Naive thymus-derived CD4-positive, alpha-beta T cell (primary cell): ENCODE measurements at regions of chr9 and their contacts with region 1.

Region 1: GRCh38 chr9:3467593-3468219 is 58.1 kb downstream of the RFX3 start:
- DNase-seq: peak; percentile 13 to 72 (median 53)
- ATAC-seq: peak; percentile 98
- H3K4me3 ChIP-seq: no peak overlapping the region
- H3K4me3 Mint-ChIP-seq: peak overlapping the region in 1 of 10 donors; percentile 39
- H3K27ac ChIP-seq: no peak overlapping the region
- H3K27ac Mint-ChIP-seq: peak overlapping the region in 3 of 9 donors; percentile 40 to 65 (median 53)
- H3K4me1 ChIP-seq: peaks cover 3 to 4% of the 10 kb centered on the region in 2 donors
- H3K4me1 Mint-ChIP-seq: peaks cover 3 to 25% (median 4%) of the 10 kb centered on the region in 7 donors
- H3K27me3 ChIP-seq: no peaks in the 10 kb centered on the region
- H3K27me3 Mint-ChIP-seq: no peaks in the 10 kb centered on the region

Region 2: DNA sequence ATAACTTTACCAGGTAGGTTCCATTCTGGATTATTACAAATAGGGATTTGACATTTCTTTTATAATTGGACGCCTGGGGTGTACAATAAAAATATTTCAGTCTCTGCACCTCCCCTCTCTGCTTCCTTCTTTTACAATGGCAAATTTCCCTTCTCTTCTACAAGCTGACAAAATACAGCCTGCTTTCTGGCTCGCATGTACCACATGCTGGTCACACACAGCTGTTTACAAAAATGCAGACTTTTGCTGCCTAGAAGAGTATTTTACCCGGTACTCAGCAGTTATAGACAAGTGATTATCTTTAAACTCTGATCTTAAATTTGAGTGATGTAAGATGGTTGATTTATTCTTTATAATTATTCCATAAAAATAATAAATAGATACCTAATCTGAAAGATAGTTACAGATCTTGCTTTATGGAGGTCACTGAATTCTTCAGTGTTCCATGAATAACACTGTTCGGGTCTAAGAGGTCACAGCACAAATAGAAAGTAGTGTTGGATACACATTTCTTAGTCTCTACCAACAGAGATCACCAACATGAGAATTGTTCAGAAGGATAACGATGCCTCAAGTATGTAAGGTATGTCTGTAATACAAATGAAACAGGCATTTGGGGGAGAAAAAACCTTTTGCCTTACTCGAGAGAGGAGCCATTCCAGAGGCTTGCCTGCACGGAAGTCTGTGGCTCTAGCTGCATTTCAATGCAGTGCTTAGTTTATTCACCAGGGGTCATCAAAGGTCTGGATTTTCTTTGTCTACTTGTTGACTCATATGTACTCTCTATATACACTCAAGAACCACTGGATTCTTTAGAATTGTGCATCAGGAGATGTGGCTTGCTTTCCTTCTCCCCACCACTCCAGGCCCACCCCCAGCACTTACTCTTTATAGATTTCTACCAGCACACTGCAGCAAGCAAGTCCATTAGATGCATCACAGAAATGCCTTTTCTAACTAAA is 264.7 kb after region 1 on chr9:
- CTCF ChIA-PET with region 1: no interaction called
- POLR2A ChIA-PET with region 1: no interaction called
- intact Hi-C with region 1: loop called (anchors 1 kb)
- DNase-seq: peak in 7 of 9 donors; percentile 12 to 60 (median 41)
- ATAC-seq: peak; percentile 89
- H3K4me3 ChIP-seq: no peak overlapping the region
- H3K4me3 Mint-ChIP-seq: peak overlapping the region in 5 of 10 donors; percentile 9 to 53 (median 35)
- H3K27ac ChIP-seq: no peak overlapping the region
- H3K27ac Mint-ChIP-seq: peak overlapping the region in 1 of 9 donors; percentile 39
- H3K4me1 ChIP-seq: no peaks in the 10 kb centered on the region
- H3K4me1 Mint-ChIP-seq: peaks cover 0 to 18% (median 5%) of the 10 kb centered on the region in 7 donors
- H3K27me3 ChIP-seq: no peaks in the 10 kb centered on the region
- H3K27me3 Mint-ChIP-seq: no peaks in the 10 kb centered on the region

Region 3: DNA sequence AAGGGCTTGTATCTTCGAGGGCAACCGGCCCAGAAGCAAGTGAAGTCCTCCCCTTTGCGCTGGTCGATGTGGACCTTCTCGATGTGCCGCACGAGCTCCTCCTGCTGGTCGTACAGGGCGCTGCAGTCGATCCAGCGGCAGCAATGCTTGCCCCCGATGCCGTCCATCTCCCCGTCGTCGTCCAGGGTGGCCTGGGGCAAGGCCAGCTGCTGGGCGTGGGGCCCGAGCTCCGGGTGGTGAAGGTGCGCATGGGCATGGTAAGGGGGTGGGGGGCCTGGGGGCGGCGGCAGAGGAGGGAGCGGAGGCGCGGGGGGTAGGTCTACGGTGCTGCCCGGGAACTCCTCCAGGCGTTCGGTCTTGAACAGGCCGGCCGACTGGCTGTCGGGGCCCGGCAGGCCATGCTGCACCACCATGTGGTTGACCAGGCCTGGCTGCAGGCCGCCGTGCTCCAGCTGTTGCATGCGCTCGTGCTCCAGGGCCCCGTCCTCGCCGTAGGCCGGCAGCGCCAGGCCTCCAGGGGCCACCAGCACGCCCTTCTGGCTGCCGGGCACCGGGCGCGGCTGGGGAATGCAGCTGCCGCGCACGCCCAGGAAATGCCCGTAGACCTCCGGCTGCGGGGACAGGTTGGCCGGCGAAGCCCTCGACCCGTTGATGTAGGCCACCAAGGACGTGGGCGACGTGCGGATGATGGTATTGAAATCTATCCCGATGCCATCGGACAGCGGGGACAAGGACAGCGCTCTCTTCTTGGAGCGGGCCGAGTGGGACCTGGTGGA is 650.3 kb after region 1 on chr9:
- CTCF ChIA-PET with region 1: no interaction called
- POLR2A ChIA-PET with region 1: no interaction called
- intact Hi-C with region 1: loop called in 1 of 2 experiments (anchors 5 kb)
- DNase-seq: peak in 7 of 9 donors; percentile 5 to 48 (median 13)
- ATAC-seq: no peak
- H3K4me3 ChIP-seq: no peak overlapping the region
- H3K4me3 Mint-ChIP-seq: no peak overlapping the region
- H3K27ac ChIP-seq: no peak overlapping the region
- H3K27ac Mint-ChIP-seq: no peak overlapping the region
- H3K4me1 ChIP-seq: no peaks in the 10 kb centered on the region
- H3K4me1 Mint-ChIP-seq: peaks cover 0 to 2% (median 0%) of the 10 kb centered on the region in 7 donors
- H3K27me3 ChIP-seq: no peaks in the 10 kb centered on the region
- H3K27me3 Mint-ChIP-seq: no peaks in the 10 kb centered on the region

Region 4: GRCh38 chr9:4297151-4297785 is 829.6 kb after region 1 on chr9:
- CTCF ChIA-PET with region 1: no interaction called
- POLR2A ChIA-PET with region 1: no interaction called
- intact Hi-C with region 1: loop called (anchors 5 kb)
- DNase-seq: peak; percentile 12 to 47 (median 29)
- ATAC-seq: peak; percentile 55
- H3K4me3 ChIP-seq: peak overlapping the region; percentile 74
- H3K4me3 Mint-ChIP-seq: peak overlapping the region; percentile 93 to 98 (median 96)
- H3K27ac ChIP-seq: peak overlapping the region; percentile 68
- H3K27ac Mint-ChIP-seq: peak overlapping the region; percentile 80 to 97 (median 88)
- H3K4me1 ChIP-seq: peaks cover 0 to 4% of the 10 kb centered on the region in 2 donors
- H3K4me1 Mint-ChIP-seq: peaks cover 15 to 34% (median 21%) of the 10 kb centered on the region in 7 donors
- H3K27me3 ChIP-seq: no peaks in the 10 kb centered on the region
- H3K27me3 Mint-ChIP-seq: peaks cover 0 to 67% (median 28%) of the 10 kb centered on the region in 5 donors

Region 5: DNA sequence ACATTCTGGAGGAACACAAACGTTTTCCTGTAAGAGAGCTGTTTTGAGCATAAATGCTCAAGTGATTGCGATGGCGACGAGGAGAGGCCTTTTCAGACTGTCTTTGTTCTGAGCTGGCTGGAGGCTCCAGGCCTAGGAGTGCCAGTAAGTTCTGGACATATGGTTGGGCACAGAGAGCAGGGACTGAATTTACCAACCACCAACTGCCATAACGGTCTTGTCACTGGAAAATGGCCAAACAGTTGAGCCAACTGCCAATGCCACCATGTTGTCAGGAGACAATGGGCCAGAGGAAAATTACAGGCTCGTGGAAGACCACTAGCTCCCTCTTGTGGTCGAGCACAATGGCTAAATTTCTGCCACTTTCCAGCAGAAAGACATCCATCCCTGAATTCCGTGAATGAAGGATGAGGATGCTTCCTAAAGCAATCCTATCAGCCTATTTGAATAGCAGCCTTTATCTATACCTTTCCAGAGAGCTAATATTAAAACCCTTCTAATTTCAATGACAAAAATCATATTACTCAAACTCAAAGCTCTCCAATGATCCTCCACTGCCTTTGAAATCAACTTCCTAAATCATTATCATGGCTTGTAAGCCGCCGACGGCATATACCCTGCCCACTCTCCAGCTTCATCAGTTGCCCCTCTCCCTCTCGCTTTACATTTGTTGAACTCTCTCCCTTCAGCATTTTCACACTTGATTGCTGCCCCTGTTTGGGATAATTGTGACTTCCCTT is 899.1 kb after region 1 on chr9:
- CTCF ChIA-PET with region 1: no interaction called
- POLR2A ChIA-PET with region 1: no interaction called
- intact Hi-C with region 1: loop called (anchors 5 to 10 kb)
- DNase-seq: peak in 5 of 9 donors; percentile 11 to 37 (median 23)
- ATAC-seq: no peak
- H3K4me3 ChIP-seq: no peak overlapping the region
- H3K4me3 Mint-ChIP-seq: no peak overlapping the region
- H3K27ac ChIP-seq: no peak overlapping the region
- H3K27ac Mint-ChIP-seq: no peak overlapping the region
- H3K4me1 ChIP-seq: no peaks in the 10 kb centered on the region
- H3K4me1 Mint-ChIP-seq: peaks cover 0 to 1% (median 0%) of the 10 kb centered on the region in 7 donors
- H3K27me3 ChIP-seq: no peaks in the 10 kb centered on the region
- H3K27me3 Mint-ChIP-seq: peaks cover 0 to 8% (median 0%) of the 10 kb centered on the region in 5 donors